Natural killer cell (primary cell): ENCODE measurements at regions of chr17 and their contacts with region 1.

Region 1: DNA sequence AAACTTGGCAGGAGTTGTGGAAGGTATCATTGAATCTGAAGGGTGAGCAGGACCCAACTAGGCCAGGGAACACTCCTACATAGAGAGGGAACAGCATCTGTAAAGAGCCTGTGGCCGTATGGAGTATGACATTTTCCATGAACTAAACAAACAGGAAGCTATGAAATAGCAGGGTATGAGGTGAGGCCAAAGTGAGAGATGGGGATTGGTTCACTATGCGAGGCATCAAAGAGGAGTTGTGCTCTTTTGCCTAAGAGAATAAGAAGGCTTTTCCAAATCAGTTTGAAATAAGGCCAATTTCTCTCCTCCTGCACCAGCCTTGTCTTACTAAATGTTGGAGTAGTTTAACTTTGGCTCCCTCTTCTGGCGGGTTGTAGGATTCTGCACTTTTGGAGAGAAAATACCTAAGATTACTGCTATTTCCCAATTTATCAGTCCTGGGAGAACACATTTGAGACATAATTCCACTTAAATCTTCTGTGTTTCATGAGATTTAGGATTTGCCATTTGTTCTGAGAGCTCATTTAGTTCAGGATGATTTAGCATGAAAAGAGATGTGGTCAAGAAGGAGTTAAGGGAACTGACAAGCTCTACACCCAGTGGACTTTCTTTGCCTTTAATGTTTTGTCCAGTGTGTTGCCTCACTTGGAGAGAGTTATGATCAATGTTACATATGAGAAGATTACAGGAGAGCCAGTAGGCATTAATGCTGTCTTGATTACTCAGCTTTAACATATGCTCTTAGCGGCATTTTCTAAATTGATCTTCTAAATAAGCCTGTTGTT is 55.4 kb downstream of the TNRC6C start:
- DNase-seq: peak in 1 of 2 donors; percentile 87
- ATAC-seq: peak; percentile 44 to 77 (median 70)
- H3K4me3 ChIP-seq: no peak overlapping the region
- H3K4me3 Mint-ChIP-seq: no peak overlapping the region
- H3K27ac ChIP-seq: no peak overlapping the region
- H3K27ac Mint-ChIP-seq: peak overlapping the region; percentile 5 to 17
- H3K4me1 ChIP-seq: no peaks in the 10 kb centered on the region
- H3K4me1 Mint-ChIP-seq: peaks cover 26 to 31% of the 10 kb centered on the region in 2 donors
- H3K27me3 ChIP-seq: no peaks in the 10 kb centered on the region
- H3K27me3 Mint-ChIP-seq: no peaks in the 10 kb centered on the region
- CTCF ChIP-seq: peak; percentile 78

Region 2: GRCh38 chr17:77542551-77543490 is 471.1 kb before region 1 on chr17:
- intact Hi-C with region 1: loop called (anchors 1 kb)
- DNase-seq: peak; percentile 33 to 81
- ATAC-seq: peak; percentile 60 to 87 (median 81)
- H3K4me3 ChIP-seq: no peak overlapping the region
- H3K4me3 Mint-ChIP-seq: no peak overlapping the region
- H3K27ac ChIP-seq: no peak overlapping the region
- H3K27ac Mint-ChIP-seq: no peak overlapping the region
- H3K4me1 ChIP-seq: no peaks in the 10 kb centered on the region
- H3K4me1 Mint-ChIP-seq: peaks cover 0 to 4% of the 10 kb centered on the region in 2 donors
- H3K27me3 ChIP-seq: no peaks in the 10 kb centered on the region
- H3K27me3 Mint-ChIP-seq: peaks cover 21 to 25% of the 10 kb centered on the region in 2 donors
- CTCF ChIP-seq: peak; percentile 62

Region 3: DNA sequence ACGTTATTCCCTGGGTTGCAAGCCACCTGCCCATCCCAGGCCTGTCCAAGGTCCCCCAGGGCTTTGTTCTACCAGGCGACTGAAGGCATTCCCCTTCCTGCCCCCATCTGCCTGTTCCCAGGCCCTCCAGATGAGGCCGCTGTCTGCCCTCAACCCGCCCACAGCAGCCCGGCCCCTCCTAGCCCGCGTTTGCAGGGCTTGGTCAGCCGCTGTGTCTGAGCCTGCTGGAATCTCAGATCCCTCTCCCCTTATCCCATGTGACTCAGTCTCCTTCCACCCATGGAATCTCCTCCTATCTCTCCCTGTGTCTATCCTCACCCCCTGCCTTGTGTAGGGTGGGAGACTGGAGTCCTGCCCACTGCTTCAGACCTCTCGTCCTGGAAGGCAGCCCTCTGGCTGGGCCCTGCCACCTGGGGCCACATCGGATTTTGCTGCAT is 241.4 kb before region 1 on chr17:
- intact Hi-C with region 1: loop called (anchors 1 kb)
- DNase-seq: peak; percentile 71 to 83
- ATAC-seq: peak; percentile 91 to 100 (median 100)
- H3K4me3 ChIP-seq: no peak overlapping the region
- H3K4me3 Mint-ChIP-seq: peak overlapping the region; percentile 42
- H3K27ac ChIP-seq: no peak overlapping the region
- H3K27ac Mint-ChIP-seq: peak overlapping the region; percentile 72 to 89
- H3K4me1 ChIP-seq: peaks cover 14% of the 10 kb centered on the region
- H3K4me1 Mint-ChIP-seq: peaks cover 16% of the 10 kb centered on the region in 2 donors
- H3K27me3 ChIP-seq: no peaks in the 10 kb centered on the region
- H3K27me3 Mint-ChIP-seq: peaks cover 0 to 3% of the 10 kb centered on the region in 2 donors
- CTCF ChIP-seq: peak; percentile 87